B cell (primary cell): ENCODE measurements at regions of chr11 and their contacts with region 1.

Region 1: DNA sequence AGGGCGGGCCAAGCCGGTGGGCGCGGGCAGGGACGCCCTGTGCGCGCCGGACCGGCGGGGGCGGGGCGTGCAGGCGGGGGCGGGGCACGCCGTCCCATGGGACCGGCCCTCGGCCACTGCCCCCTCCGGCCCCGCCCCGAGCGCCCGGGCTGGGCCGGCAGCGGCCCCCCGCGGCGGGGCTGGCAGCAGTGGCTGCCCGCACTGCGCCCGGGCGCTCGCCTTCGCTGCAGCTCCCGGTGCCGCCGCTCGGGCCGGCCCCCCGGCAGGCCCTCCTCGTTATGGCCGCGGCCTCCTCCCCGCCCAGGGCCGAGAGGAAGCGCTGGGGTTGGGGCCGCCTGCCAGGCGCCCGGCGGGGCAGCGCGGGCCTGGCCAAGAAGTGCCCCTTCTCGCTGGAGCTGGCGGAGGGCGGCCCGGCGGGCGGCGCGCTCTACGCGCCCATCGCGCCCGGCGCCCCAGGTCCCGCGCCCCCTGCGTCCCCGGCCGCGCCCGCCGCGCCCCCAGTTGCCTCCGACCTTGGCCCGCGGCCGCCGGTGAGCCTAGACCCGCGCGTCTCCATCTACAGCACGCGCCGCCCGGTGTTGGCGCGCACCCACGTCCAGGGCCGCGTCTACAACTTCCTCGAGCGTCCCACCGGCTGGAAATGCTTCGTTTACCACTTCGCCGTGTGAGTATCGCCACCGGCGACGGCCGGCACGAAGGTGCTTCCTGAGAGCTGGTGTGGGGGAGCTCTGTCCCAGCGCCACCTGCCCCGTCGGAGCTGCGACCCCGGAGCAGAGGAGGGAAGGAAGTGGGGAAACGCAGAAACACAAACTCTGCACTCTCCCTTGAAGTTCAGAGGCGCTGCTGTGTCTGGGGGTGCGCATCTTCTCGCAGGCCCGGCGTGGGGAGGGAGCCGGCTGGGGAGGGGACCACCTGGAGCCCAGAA is at the start of gene KCNQ1:
- DNase-seq: peak; percentile 76
- ATAC-seq: peak; percentile 82
- H3K4me3 ChIP-seq: peak within 1 kb of the TSS; percentile 32 to 76 (median 64)
- H3K4me3 Mint-ChIP-seq: peak within 1 kb of the TSS; percentile 93
- H3K27ac ChIP-seq: no peak within 1 kb of the TSS
- H3K27ac Mint-ChIP-seq: peak within 1 kb of the TSS; percentile 87
- H3K4me1 ChIP-seq: peaks cover 33 to 41% of the 10 kb centered on the region in 2 donors
- H3K4me1 Mint-ChIP-seq: peaks cover 31% of the 10 kb centered on the region
- H3K27me3 ChIP-seq: peaks cover 0 to 10% (median 0%) of the 10 kb centered on the region in 4 experiments
- H3K27me3 Mint-ChIP-seq: no peaks in the 10 kb centered on the region
- CTCF ChIP-seq: no peak
- total RNA-seq, gene KCNQ1: 28.8 and 31.9 TPM in 2 replicates

Region 2: GRCh38 chr11:2462908-2463765 is 18.1 kb after region 1 on chr11:
- CTCF ChIA-PET with region 1: interaction called, 4 read pairs
- POLR2A ChIA-PET with region 1: no interaction called
- intact Hi-C with region 1: loop called (anchors 2 kb)
- DNase-seq: peak; percentile 43
- ATAC-seq: peak; percentile 69
- H3K4me3 ChIP-seq: no peak overlapping the region
- H3K4me3 Mint-ChIP-seq: no peak overlapping the region
- H3K27ac ChIP-seq: no peak overlapping the region
- H3K27ac Mint-ChIP-seq: peak overlapping the region; percentile 68
- H3K4me1 ChIP-seq: peaks cover 43 to 75% of the 10 kb centered on the region in 2 donors
- H3K4me1 Mint-ChIP-seq: peaks cover 73% of the 10 kb centered on the region
- H3K27me3 ChIP-seq: no peaks in the 10 kb centered on the region
- H3K27me3 Mint-ChIP-seq: no peaks in the 10 kb centered on the region
- CTCF ChIP-seq: no peak

Region 3: DNA sequence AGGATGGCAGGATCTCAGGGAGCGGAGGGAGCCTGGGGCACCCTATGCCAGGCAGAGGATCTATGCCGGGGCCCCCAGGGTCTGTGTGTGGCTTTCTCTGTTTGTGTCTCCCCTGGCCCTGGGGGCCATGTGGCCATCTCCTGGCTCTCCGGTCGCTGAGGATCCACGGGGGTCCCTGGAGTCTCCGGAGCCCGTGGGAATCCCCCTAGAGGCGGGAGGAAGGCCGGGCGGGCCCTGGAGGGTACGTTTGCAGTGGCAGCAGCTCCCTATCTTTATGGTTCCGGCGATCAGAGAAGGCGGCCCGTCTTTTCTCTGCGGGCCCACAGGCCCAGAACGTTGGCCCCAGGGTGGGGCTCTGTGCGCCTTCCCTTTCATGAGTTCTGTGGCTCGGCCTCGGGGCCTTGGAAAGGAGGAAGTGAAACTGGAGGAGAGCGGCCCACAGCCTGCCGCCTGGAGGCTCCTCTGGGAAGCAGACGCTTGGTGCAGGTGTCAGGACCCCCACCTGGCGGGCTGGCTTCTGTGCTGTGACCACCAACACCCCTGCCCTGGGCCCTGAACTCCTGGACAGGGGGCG is 81.8 kb after region 1 on chr11:
- CTCF ChIA-PET with region 1: interaction called, 25 read pairs
- POLR2A ChIA-PET with region 1: interaction called, 7 read pairs
- intact Hi-C with region 1: loop called (anchors 1 kb)
- DNase-seq: peak; percentile 89
- ATAC-seq: peak; percentile 91
- H3K4me3 ChIP-seq: peak overlapping the region in 4 of 5 experiments; percentile 14 to 57 (median 36)
- H3K4me3 Mint-ChIP-seq: peak overlapping the region; percentile 83
- H3K27ac ChIP-seq: peak overlapping the region; percentile 66 to 72
- H3K27ac Mint-ChIP-seq: peak overlapping the region; percentile 91
- H3K4me1 ChIP-seq: peaks cover 25 to 41% of the 10 kb centered on the region in 2 donors
- H3K4me1 Mint-ChIP-seq: peaks cover 45% of the 10 kb centered on the region
- H3K27me3 ChIP-seq: no peaks in the 10 kb centered on the region
- H3K27me3 Mint-ChIP-seq: no peaks in the 10 kb centered on the region
- CTCF ChIP-seq: peak; percentile 61

Region 4: GRCh38 chr11:2892215-2893020 is 447.3 kb after region 1 on chr11:
- CTCF ChIA-PET with region 1: interaction called, 7 read pairs
- POLR2A ChIA-PET with region 1: no interaction called
- intact Hi-C with region 1: loop called (anchors 2 kb)
- DNase-seq: peak; percentile 74
- ATAC-seq: peak; percentile 69
- H3K4me3 ChIP-seq: peak overlapping the region in 4 of 5 experiments; percentile 33 to 62 (median 50)
- H3K4me3 Mint-ChIP-seq: peak overlapping the region; percentile 75
- H3K27ac ChIP-seq: no peak overlapping the region
- H3K27ac Mint-ChIP-seq: no peak overlapping the region
- H3K4me1 ChIP-seq: peaks cover 15 to 21% of the 10 kb centered on the region in 2 donors
- H3K4me1 Mint-ChIP-seq: peaks cover 17% of the 10 kb centered on the region
- H3K27me3 ChIP-seq: peaks cover 0 to 7% (median 0%) of the 10 kb centered on the region in 4 experiments
- H3K27me3 Mint-ChIP-seq: no peaks in the 10 kb centered on the region
- CTCF ChIP-seq: peak; percentile 88